ENCODE measurements at regions of chr5 and their contacts with region 1.

Region 1: GRCh38 chr5:94793113-94793815 is 174.8 kb downstream of the SLF1 start:
- DNase-seq: peak; percentile 47
- H3K4me3 Mint-ChIP-seq: peak overlapping the region; percentile 64
- H3K27ac Mint-ChIP-seq: peak overlapping the region; percentile 94
- H3K4me1 Mint-ChIP-seq: peaks cover 67% of the 10 kb centered on the region
- H3K27me3 Mint-ChIP-seq: no peaks in the 10 kb centered on the region

Region 2: DNA sequence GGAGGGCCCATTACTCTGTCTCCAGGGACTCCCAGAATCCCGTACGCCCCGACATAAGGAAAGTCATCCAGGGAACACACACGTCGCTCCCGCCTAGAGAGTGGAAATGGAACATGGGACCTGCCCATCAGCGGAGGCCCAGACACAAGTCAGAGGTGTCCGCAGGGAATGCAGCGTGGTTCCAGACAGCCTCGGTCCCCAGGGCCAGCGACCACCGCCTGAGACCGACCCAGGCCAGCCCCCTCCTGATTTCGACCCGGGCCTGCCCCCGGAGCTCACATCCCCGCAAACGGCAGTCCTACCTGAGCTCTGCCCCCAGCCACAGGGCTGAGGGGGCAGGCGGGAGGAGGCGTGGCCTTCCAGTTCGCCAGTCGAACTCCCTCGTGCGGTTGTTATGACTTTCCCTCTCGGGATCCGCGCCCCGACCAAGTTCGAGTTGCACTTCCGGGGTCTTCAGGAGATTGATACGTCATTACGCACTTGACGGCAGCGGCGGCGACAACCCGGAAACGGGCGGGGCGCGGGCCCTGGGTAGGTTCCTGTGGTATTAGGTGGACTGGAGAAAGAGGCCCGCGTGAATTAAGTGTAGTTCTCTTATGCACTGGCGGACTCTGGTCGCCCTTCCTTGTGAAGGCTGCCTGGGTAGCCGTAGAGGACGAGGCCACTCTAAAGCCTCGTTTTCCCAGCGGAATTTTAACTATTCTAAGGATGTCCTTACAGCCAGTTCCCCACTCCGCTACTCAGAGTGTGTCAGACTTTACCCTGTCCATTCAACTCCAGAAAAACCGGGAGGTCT is 681.9 kb before region 1 on chr5:
- intact Hi-C with region 1: loop called (anchors 2 kb)
- DNase-seq: peak; percentile 88
- H3K4me3 Mint-ChIP-seq: peak overlapping the region; percentile 93
- H3K27ac Mint-ChIP-seq: peak overlapping the region; percentile 89
- H3K4me1 Mint-ChIP-seq: peaks cover 31% of the 10 kb centered on the region
- H3K27me3 Mint-ChIP-seq: peaks cover 3% of the 10 kb centered on the region

Region 3: DNA sequence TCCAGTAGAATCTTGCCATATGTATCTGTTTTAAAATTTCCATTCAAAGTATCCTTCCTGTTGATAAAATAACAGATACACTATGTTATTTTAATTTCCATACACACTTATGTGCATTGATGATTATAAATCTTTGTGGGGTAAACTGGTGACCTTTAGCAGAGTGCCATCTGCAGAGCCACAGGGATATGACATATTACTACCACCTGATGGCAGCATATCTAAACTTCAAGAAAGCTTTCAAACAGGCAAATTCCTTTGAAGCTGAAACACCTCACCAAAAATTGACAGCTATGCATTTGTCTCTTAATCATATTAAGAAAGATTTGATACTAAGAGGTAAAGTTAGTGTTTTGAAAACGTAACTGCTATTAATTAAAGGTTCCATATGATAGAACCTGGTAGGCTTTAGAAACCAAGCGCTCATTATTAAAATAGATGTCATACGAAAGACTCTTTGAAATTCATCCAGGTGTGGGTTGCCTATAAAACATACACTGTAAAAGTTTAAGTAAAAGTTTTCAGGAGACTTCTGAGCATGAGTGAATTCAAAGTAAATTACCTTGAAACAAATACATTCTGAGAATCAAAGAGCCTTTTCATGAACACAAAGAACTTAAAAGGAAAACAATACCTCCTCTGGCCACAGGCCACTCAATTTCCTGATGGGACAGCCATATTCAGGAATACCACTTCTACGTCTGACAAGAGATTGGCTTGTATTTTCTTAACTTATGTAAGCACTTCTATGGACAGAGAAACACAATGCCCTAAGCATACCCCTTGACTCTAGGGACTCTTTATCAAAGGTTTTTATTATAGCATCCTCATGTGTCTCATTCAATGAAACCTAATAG is 268.2 kb before region 1 on chr5:
- intact Hi-C with region 1: loop called (anchors 1 kb)
- DNase-seq: peak; percentile 22
- H3K4me3 Mint-ChIP-seq: no peak overlapping the region
- H3K27ac Mint-ChIP-seq: no peak overlapping the region
- H3K4me1 Mint-ChIP-seq: peaks cover 9% of the 10 kb centered on the region
- H3K27me3 Mint-ChIP-seq: no peaks in the 10 kb centered on the region

Region 4: GRCh38 chr5:94618493-94619328 is 174.6 kb before region 1 on chr5 and contains the starts of genes KIAA0825 and SLF1:
- intact Hi-C with region 1: loop called (anchors 1 kb)
- DNase-seq: peak; percentile 83
- H3K4me3 Mint-ChIP-seq: peak within 1 kb of the TSS; percentile 89
- H3K27ac Mint-ChIP-seq: peak within 1 kb of the TSS; percentile 96
- H3K4me1 Mint-ChIP-seq: peaks cover 55% of the 10 kb centered on the region
- H3K27me3 Mint-ChIP-seq: no peaks in the 10 kb centered on the region
- total RNA-seq, gene KIAA0825: 0.36 and 0.47 TPM in 2 replicates
- total RNA-seq, gene SLF1: 15.4 and 17.9 TPM in 2 replicates

Region 5: GRCh38 chr5:94740286-94740685 is 53.0 kb before region 1 on chr5:
- intact Hi-C with region 1: loop called (anchors 2 kb)
- DNase-seq: no peak
- H3K4me3 Mint-ChIP-seq: no peak overlapping the region
- H3K27ac Mint-ChIP-seq: no peak overlapping the region
- H3K4me1 Mint-ChIP-seq: no peaks in the 10 kb centered on the region
- H3K27me3 Mint-ChIP-seq: peaks cover 2% of the 10 kb centered on the region

Region 6: GRCh38 chr5:95035891-95036685 is 242.8 kb after region 1 on chr5:
- intact Hi-C with region 1: no loop called
- DNase-seq: no peak
- H3K4me3 Mint-ChIP-seq: no peak overlapping the region
- H3K27ac Mint-ChIP-seq: no peak overlapping the region
- H3K4me1 Mint-ChIP-seq: no peaks in the 10 kb centered on the region
- H3K27me3 Mint-ChIP-seq: peaks cover 2% of the 10 kb centered on the region

Measured in activated T-helper 1 cell treated with anti-CD3 and anti-CD28 coated beads, Interleukin-12 subunit alpha, Interleukin-12 subunit beta, Interleukin-2, Interleukin-4 antibody, amounts not matched to agents 30 ng/mL and 10 ng/mL and 1 ng/mL, durations not matched to agents 14 hours and 24 hours and 36 hours (primary cell).